Adrenal gland (tissue), 19 donors: ENCODE measurements at regions of chr9 and their contacts with region 1.

Region 1: GRCh38 chr9:110217656-110218099 is 9.7 kb upstream of the C9orf152 start:
- DNase-seq: peak in 2 of 7 donors; percentile 28 to 30
- H3K4me3 ChIP-seq: no peak overlapping the region
- H3K27ac ChIP-seq: no peak overlapping the region
- H3K4me1 ChIP-seq: no peaks in the 10 kb centered on the region
- H3K27me3 ChIP-seq: no peaks in the 10 kb centered on the region
- CTCF ChIP-seq: peak; percentile 55 to 81 (median 73)
- POLR2A ChIP-seq: no peak

Region 2: DNA sequence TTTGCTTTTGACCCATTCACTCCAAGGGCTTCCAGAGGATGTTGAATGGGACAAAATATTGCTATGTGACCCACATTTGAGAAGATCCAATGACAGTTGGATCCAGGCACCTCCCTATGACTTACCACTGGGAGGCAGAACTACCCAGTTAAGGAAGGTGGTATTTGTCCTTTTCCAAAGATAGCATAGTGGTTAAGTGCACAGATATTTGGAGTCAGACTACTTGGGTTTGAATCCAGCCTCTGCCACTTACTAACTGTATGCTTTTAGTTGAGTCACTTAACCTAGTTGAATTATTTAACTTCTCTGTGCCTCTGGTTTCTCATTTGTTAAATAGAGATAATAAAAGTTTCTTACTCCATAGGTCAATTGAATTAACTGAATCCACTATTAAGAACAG is 512.2 kb before region 1 on chr9:
- intact Hi-C with region 1: no loop called
- DNase-seq: no peak
- H3K4me3 ChIP-seq: no peak overlapping the region
- H3K27ac ChIP-seq: no peak overlapping the region
- H3K4me1 ChIP-seq: no peaks in the 10 kb centered on the region
- H3K27me3 ChIP-seq: no peaks in the 10 kb centered on the region
- CTCF ChIP-seq: peak in 1 of 6 experiments; percentile 14
- POLR2A ChIP-seq: no peak

Region 3: DNA sequence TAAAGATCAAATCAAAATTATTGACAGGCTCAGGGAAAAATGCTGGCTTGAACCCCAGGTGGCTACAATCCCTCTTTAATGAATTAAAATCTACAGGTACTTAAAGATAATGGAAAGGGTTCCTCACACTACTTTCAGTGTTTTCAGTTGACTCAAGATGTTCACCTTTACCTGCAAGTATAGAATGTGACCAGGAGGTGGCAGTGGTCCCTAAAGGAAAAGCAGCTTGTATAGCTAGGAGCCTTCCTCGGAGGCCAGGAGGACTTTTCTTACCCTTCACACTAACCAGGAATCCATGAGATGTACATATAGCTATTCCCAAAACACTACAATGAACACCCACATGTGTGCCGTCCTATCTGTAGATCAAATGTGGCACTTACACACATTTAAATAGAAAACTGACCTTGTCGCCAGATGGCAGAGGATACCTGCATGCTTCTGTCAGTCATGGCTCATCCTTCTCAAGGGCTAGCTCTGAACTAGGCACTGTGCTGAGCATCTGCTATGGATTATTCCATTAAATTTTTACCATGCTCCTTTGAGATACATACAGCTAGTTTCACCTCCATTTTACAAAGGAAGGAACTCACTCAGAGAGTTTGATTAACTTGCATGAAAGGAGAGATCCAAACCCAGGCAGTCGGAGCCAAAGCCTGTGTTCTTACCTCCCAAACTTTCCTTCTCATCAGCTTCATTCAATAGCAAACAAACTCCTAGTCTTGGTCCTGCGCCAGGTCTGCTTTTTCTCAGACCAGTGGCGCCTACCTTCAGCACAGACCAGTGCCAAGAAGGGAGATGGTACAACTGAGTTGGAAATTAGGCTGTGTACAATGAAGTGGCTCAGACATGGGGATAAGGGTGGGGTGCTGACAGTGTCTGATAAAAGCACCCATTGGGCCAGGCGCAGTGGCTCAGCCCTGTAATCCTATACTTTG is 34.2 kb before region 1 on chr9:
- intact Hi-C with region 1: loop called in 1 of 2 experiments (anchors 5 kb)
- DNase-seq: peak; percentile 63 to 86 (median 72)
- H3K4me3 ChIP-seq: no peak overlapping the region
- H3K27ac ChIP-seq: no peak overlapping the region
- H3K4me1 ChIP-seq: peaks cover 0 to 2% of the 10 kb centered on the region in 2 donors
- H3K27me3 ChIP-seq: no peaks in the 10 kb centered on the region
- CTCF ChIP-seq: peak; percentile 58 to 84 (median 75)
- POLR2A ChIP-seq: no peak

Region 4: GRCh38 chr9:110410961-110411360 is 193.3 kb after region 1 on chr9:
- intact Hi-C with region 1: no loop called
- DNase-seq: no peak
- H3K4me3 ChIP-seq: no peak overlapping the region
- H3K27ac ChIP-seq: no peak overlapping the region
- H3K4me1 ChIP-seq: no peaks in the 10 kb centered on the region
- H3K27me3 ChIP-seq: no peaks in the 10 kb centered on the region
- CTCF ChIP-seq: no peak
- POLR2A ChIP-seq: no peak

Region 5: DNA sequence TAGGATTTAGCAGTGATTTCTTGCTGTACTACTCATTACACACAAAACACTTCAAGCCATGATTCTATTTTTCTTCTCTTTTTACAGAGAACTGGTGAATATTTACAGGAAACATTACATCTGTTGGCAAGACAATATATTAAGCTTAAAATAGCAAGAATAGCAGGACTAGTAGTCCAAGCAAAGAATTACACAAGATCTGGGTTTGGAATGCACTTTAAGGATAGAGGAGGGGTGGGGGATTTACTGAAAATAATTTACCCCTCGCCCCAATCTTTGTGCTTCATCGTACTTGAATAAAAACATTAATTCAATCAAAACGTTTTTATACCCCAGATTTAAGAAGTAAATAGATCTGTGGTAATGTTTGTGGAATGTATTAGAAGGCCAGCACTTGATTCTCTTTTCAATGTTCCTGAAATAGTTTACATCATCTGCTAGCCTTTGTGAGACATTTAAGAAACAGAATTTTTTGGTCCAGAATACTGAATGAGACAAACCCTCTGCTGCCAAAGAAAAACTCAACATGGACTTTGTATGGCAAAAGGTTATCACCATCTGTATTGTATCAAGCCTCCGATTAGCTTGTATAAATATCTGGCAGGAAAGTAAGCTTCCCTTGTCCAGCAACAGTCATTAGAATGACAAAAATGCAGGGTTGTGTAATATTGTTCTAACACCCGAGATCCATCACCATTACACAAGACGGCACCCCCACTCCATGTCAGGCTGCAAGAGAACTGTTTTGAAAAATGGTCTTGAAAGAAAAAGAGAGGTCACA is 338.1 kb after region 1 on chr9:
- intact Hi-C with region 1: no loop called
- DNase-seq: peak; percentile 18 to 82 (median 51)
- H3K4me3 ChIP-seq: no peak overlapping the region
- H3K27ac ChIP-seq: peak overlapping the region in 1 of 5 donors; percentile 69
- H3K4me1 ChIP-seq: peaks cover 0 to 11% of the 10 kb centered on the region in 2 donors
- H3K27me3 ChIP-seq: no peaks in the 10 kb centered on the region
- CTCF ChIP-seq: no peak
- POLR2A ChIP-seq: no peak